Caco-2 (cell line): ENCODE measurements at regions of chr3 and their contacts with region 1.

Region 1: GRCh38 chr3:62665598-62666437 is 209.4 kb downstream of the CADPS start:
- DNase-seq: peak; percentile 69 to 70
- H3K4me3 ChIP-seq: no peak overlapping the region
- H3K4me3 Mint-ChIP-seq: no peak overlapping the region
- H3K27ac Mint-ChIP-seq: no peak overlapping the region
- H3K4me1 ChIP-seq: no peaks in the 10 kb centered on the region
- H3K4me1 Mint-ChIP-seq: no peaks in the 10 kb centered on the region
- H3K27me3 ChIP-seq: no peaks in the 10 kb centered on the region; the same call in 1 of the 2 replicates
- H3K27me3 Mint-ChIP-seq: peaks cover 10% of the 10 kb centered on the region
- CTCF ChIP-seq: peak; percentile 59 to 71

Region 2: GRCh38 chr3:62622553-62623193 is 43.1 kb before region 1 on chr3:
- CTCF ChIA-PET with region 1: no interaction called
- POLR2A ChIA-PET with region 1: no interaction called
- intact Hi-C with region 1: no loop called
- DNase-seq: peak in 1 of 2 experiments; percentile 44
- H3K4me3 ChIP-seq: no peak overlapping the region
- H3K4me3 Mint-ChIP-seq: no peak overlapping the region
- H3K27ac Mint-ChIP-seq: no peak overlapping the region
- H3K4me1 ChIP-seq: no peaks in the 10 kb centered on the region
- H3K4me1 Mint-ChIP-seq: no peaks in the 10 kb centered on the region
- H3K27me3 ChIP-seq: no peaks in the 10 kb centered on the region
- H3K27me3 Mint-ChIP-seq: peaks cover 14% of the 10 kb centered on the region
- CTCF ChIP-seq: peak; percentile 52 to 59

Region 3: GRCh38 chr3:62708638-62709373 is 43.0 kb after region 1 on chr3:
- CTCF ChIA-PET with region 1: no interaction called
- POLR2A ChIA-PET with region 1: no interaction called
- intact Hi-C with region 1: no loop called
- DNase-seq: no peak
- H3K4me3 ChIP-seq: no peak overlapping the region
- H3K4me3 Mint-ChIP-seq: no peak overlapping the region
- H3K27ac Mint-ChIP-seq: no peak overlapping the region
- H3K4me1 ChIP-seq: no peaks in the 10 kb centered on the region
- H3K4me1 Mint-ChIP-seq: no peaks in the 10 kb centered on the region
- H3K27me3 ChIP-seq: no peaks in the 10 kb centered on the region
- H3K27me3 Mint-ChIP-seq: peaks cover 3% of the 10 kb centered on the region
- CTCF ChIP-seq: no peak

Region 4: GRCh38 chr3:62755320-62755719 is 89.5 kb after region 1 on chr3:
- CTCF ChIA-PET with region 1: no interaction called
- POLR2A ChIA-PET with region 1: no interaction called
- intact Hi-C with region 1: loop called (anchors 2 kb)
- DNase-seq: no peak
- H3K4me3 ChIP-seq: no peak overlapping the region
- H3K4me3 Mint-ChIP-seq: no peak overlapping the region
- H3K27ac Mint-ChIP-seq: no peak overlapping the region
- H3K4me1 ChIP-seq: no peaks in the 10 kb centered on the region
- H3K4me1 Mint-ChIP-seq: no peaks in the 10 kb centered on the region
- H3K27me3 ChIP-seq: no peaks in the 10 kb centered on the region
- H3K27me3 Mint-ChIP-seq: no peaks in the 10 kb centered on the region
- CTCF ChIP-seq: no peak

Region 5: GRCh38 chr3:62803276-62803675 is 137.5 kb after region 1 on chr3:
- CTCF ChIA-PET with region 1: no interaction called
- POLR2A ChIA-PET with region 1: no interaction called
- intact Hi-C with region 1: loop called (anchors 2 kb)
- DNase-seq: no peak
- H3K4me3 ChIP-seq: no peak overlapping the region
- H3K4me3 Mint-ChIP-seq: no peak overlapping the region
- H3K27ac Mint-ChIP-seq: no peak overlapping the region
- H3K4me1 ChIP-seq: no peaks in the 10 kb centered on the region
- H3K4me1 Mint-ChIP-seq: no peaks in the 10 kb centered on the region
- H3K27me3 ChIP-seq: no peaks in the 10 kb centered on the region
- H3K27me3 Mint-ChIP-seq: peaks cover 9% of the 10 kb centered on the region
- CTCF ChIP-seq: no peak

Region 6: DNA sequence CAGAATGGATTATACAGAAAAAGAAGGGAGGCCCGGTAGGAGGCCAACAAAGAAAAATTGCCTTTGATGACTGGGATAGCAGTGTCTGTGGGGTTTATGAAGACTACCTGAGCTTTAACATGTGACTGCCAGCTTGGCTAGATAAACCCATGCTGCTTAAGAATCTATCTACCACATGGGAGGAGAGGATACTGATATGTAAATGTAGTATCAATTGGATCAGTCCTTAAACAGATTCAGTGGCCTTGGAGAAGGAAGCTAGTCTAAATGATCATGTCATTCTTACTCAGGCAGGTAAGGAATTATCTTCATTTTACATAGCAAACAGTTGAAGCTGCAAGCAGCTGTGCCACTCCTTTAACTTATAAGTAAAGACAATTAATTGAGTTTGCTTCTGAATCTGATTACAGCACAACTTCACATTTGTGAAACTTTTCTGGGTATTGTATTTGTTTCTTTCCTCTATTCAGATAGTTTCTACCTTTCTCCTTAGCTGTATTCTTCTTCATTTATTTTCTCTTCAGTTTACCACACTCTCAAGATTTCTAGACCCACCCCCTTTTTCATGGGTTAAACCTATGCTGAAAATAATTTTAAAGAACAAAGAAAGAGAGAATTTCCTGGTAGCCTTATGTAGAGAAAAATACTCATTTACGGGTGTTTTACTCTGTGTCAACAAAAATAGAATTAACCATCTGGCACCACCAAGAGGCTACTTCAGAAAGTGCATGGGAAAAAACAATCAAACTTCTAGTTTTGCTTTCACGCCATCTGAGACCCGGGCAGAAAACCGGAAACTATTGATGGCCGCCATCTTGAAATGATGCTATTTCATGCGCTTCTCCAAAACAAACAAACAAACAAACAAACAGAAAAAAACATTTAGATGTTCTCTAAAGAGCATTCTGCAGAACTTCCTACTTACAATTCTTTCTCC is 562.5 kb after region 1 on chr3:
- CTCF ChIA-PET with region 1: interaction called, 3 read pairs
- POLR2A ChIA-PET with region 1: no interaction called
- intact Hi-C with region 1: loop called (anchors 2 kb)
- DNase-seq: peak; percentile 37 to 41
- H3K4me3 ChIP-seq: no peak overlapping the region
- H3K4me3 Mint-ChIP-seq: no peak overlapping the region
- H3K27ac Mint-ChIP-seq: no peak overlapping the region
- H3K4me1 ChIP-seq: no peaks in the 10 kb centered on the region
- H3K4me1 Mint-ChIP-seq: no peaks in the 10 kb centered on the region
- H3K27me3 ChIP-seq: no peaks in the 10 kb centered on the region
- H3K27me3 Mint-ChIP-seq: peaks cover 5% of the 10 kb centered on the region
- CTCF ChIP-seq: peak; percentile 47 to 54